CD8-positive, alpha-beta T cell (primary cell): ENCODE measurements at regions of chr15 and their contacts with region 1.

Region 1: GRCh38 chr15:41585127-41586047 is 26.4 kb downstream of the TYRO3 start:
- DNase-seq: peak in 7 of 9 experiments; percentile 2 to 50 (median 34)
- ATAC-seq: peak; percentile 58
- H3K4me3 ChIP-seq: peak overlapping the region; percentile 13 to 45
- H3K4me3 Mint-ChIP-seq: peak overlapping the region; percentile 74
- H3K27ac ChIP-seq: no peak overlapping the region
- H3K27ac Mint-ChIP-seq: no peak overlapping the region
- H3K4me1 ChIP-seq: peaks cover 10% of the 10 kb centered on the region
- H3K4me1 Mint-ChIP-seq: peaks cover 9% of the 10 kb centered on the region
- H3K27me3 ChIP-seq: peaks cover 0 to 4% of the 10 kb centered on the region in 2 experiments
- H3K27me3 Mint-ChIP-seq: peaks cover 33% of the 10 kb centered on the region
- CTCF ChIP-seq: peak; percentile 12

Region 2: DNA sequence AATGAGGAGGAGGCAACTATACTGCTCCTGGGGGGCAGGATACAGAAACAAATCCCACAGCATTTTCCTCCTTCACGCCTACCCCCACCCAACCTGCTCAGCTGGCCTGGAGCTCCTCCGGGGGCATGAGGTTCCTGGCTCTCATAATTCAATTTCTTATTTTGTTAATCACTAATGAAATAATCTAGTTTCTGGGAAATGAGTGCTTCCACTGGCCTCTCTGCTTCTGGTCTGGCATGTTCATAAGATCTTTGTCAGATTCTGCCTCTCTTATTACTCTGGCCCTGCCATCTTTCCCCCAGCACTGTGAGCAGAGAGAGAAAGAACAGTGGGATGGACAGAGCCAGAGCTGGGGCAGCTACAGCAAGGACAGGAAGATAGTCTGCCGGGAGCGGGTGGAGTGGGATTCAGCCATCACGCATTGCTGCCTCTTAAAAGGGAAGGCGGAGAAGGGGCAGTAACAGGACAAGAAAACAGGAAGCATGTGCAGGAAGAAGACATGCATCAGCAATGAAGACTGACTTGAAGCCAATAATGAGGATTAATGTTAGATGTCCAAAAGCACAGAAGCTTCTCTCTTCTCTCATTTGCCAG is 54.9 kb before region 1 on chr15:
- CTCF ChIA-PET with region 1: no interaction called
- POLR2A ChIA-PET with region 1: no interaction called
- intact Hi-C with region 1: loop called in 1 of 2 experiments (anchors 2 kb)
- DNase-seq: no peak
- ATAC-seq: no peak
- H3K4me3 ChIP-seq: no peak overlapping the region
- H3K4me3 Mint-ChIP-seq: no peak overlapping the region
- H3K27ac ChIP-seq: no peak overlapping the region
- H3K27ac Mint-ChIP-seq: no peak overlapping the region
- H3K4me1 ChIP-seq: no peaks in the 10 kb centered on the region
- H3K4me1 Mint-ChIP-seq: no peaks in the 10 kb centered on the region
- H3K27me3 ChIP-seq: no peaks in the 10 kb centered on the region
- H3K27me3 Mint-ChIP-seq: no peaks in the 10 kb centered on the region
- CTCF ChIP-seq: no peak